Activated CD8-positive, alpha-beta T cell treated with anti-CD3 and anti-CD28 coated beads for 36 hours (primary cell): ENCODE measurements at regions of chr12 and their contacts with region 1.

Region 1: DNA sequence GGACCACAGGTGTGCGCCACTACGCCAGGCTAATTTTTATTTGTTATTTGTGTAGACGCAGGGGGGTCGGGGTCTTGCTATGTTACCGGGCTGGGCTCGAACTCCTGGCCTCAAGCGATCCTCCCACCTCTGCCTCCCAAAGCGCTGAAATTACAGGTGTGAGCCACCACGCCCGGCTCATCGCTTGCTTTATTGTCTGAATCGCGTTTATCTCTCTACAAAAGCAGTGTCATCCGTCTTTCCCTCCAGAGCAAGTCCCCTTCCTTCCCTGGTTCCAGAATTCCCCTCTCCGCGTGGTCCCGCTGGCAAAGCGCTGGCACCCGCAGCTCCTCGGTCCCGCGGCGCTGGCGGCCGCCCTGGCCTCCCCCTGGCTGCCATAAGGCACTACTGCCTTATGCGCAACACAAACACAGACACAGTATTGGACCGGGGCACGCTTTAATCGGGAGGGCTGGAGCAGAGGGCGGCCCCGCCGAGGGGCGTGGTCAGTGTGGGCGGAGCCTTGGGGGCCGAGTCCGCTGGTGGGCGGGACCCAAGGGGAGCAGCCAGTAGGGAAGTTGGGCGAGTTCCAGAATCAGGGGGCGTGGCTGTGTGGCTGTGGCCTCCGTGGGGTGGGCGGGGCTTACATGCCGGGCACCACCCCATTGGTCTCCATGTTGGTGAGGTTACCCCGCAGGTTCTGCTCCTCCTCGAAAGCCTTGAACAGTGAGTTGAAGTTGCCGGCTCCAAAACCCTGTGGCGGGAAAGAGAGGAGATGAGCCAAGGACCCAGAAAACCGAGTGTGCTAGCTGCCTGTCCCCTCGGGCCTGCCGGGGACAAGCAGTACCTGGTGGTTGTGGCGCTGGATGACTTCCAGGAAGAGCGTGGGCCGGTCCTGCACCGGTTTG is 19.3 kb downstream of the HPD start:
- DNase-seq: peak; percentile 100
- ATAC-seq: peak; percentile 98
- H3K4me3 Mint-ChIP-seq: peak overlapping the region; percentile 99
- H3K27ac Mint-ChIP-seq: peak overlapping the region; percentile 92
- H3K4me1 Mint-ChIP-seq: peaks cover 16% of the 10 kb centered on the region
- H3K27me3 Mint-ChIP-seq: no peaks in the 10 kb centered on the region
- CTCF ChIP-seq: peak; percentile 58

Region 2: DNA sequence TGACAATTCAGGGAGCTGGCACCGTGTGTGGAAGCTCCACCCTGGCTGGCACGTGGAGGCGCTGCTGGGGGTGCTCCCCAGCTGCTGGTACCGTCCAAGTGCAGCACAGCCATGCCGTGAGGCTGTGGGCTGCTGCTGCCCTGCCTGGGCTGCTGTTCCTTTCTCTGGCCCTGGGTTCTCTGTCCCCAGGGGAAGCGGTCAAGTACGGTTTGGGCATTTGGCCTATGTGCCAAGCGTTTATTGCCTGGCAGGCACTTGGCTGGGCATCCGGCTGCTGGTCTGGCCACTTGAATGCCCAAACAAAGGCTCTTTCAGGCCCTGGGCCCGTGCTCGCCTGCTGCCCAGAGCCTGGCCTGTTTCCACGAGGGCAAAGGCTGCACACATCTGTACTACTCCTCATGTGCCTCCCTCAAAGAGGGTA is 85.5 kb before region 1 on chr12:
- CTCF ChIA-PET with region 1: no interaction called
- POLR2A ChIA-PET with region 1: no interaction called
- intact Hi-C with region 1: no loop called
- DNase-seq: no peak
- ATAC-seq: no peak
- H3K4me3 Mint-ChIP-seq: no peak overlapping the region
- H3K27ac Mint-ChIP-seq: no peak overlapping the region
- H3K4me1 Mint-ChIP-seq: peaks cover 14% of the 10 kb centered on the region
- H3K27me3 Mint-ChIP-seq: no peaks in the 10 kb centered on the region
- CTCF ChIP-seq: no peak

Region 3: GRCh38 chr12:121825041-121825523 is 14.3 kb before region 1 on chr12:
- CTCF ChIA-PET with region 1: interaction called, 6 read pairs
- POLR2A ChIA-PET with region 1: interaction called, 17 read pairs
- intact Hi-C with region 1: no loop called
- DNase-seq: no peak
- ATAC-seq: no peak
- H3K4me3 Mint-ChIP-seq: no peak overlapping the region
- H3K27ac Mint-ChIP-seq: no peak overlapping the region
- H3K4me1 Mint-ChIP-seq: peaks cover 2% of the 10 kb centered on the region
- H3K27me3 Mint-ChIP-seq: no peaks in the 10 kb centered on the region
- CTCF ChIP-seq: no peak

Region 4: DNA sequence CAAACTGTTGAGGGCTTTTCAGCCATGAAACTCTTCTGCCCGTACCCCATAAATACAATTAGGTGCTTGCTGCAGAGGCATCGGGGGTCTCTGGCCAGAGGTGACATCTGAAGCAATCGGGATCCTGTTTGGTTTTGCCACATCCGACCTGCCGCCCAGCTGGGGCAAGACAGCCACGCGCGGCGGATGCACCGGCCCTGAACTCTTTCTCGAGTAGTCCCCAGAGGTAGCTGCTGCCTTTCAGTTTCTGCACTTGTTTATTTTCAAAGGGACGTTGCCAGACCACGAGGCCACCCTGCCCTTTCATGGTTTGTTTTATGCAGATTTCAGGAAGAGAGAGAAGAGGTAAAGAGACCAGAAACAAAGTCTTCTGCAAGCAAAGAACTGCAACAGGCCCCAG is 228.6 kb after region 1 on chr12:
- CTCF ChIA-PET with region 1: no interaction called
- POLR2A ChIA-PET with region 1: no interaction called
- intact Hi-C with region 1: no loop called
- DNase-seq: peak; percentile 73
- ATAC-seq: peak; percentile 66
- H3K4me3 Mint-ChIP-seq: peak overlapping the region; percentile 28
- H3K27ac Mint-ChIP-seq: peak overlapping the region; percentile 66
- H3K4me1 Mint-ChIP-seq: peaks cover 16% of the 10 kb centered on the region
- H3K27me3 Mint-ChIP-seq: no peaks in the 10 kb centered on the region
- CTCF ChIP-seq: no peak